Pancreas (tissue), 10 donors: ENCODE measurements at regions of chr5 and their contacts with region 1.

Region 1: GRCh38 chr5:177390363-177391300 is 6.4 kb downstream of the SLC34A1 start:
- DNase-seq: peak; percentile 77 to 92 (median 86)
- ATAC-seq: peak; percentile 90 to 97 (median 95)
- H3K4me3 ChIP-seq: no peak overlapping the region
- H3K27ac ChIP-seq: no peak overlapping the region
- H3K4me1 ChIP-seq: no peaks in the 10 kb centered on the region
- H3K27me3 ChIP-seq: no peaks in the 10 kb centered on the region
- CTCF ChIP-seq: peak; percentile 95 to 99 (median 98)

Region 2: GRCh38 chr5:177311723-177312648 is 78.6 kb before region 1 on chr5 and contains the start of gene MXD3:
- intact Hi-C with region 1: loop called in 1 of 3 experiments (anchors 10 kb)
- DNase-seq: peak; percentile 92 to 95 (median 94)
- ATAC-seq: peak; percentile 61 to 93 (median 85)
- H3K4me3 ChIP-seq: peak within 1 kb of the TSS; percentile 20 to 50 (median 32)
- H3K27ac ChIP-seq: no peak within 1 kb of the TSS
- H3K4me1 ChIP-seq: peaks cover 11 to 32% (median 12%) of the 10 kb centered on the region in 3 donors
- H3K27me3 ChIP-seq: no peaks in the 10 kb centered on the region
- CTCF ChIP-seq: no peak
- total RNA-seq, gene MXD3: 3.0 to 7.1 (median 5.4) TPM

Region 3: DNA sequence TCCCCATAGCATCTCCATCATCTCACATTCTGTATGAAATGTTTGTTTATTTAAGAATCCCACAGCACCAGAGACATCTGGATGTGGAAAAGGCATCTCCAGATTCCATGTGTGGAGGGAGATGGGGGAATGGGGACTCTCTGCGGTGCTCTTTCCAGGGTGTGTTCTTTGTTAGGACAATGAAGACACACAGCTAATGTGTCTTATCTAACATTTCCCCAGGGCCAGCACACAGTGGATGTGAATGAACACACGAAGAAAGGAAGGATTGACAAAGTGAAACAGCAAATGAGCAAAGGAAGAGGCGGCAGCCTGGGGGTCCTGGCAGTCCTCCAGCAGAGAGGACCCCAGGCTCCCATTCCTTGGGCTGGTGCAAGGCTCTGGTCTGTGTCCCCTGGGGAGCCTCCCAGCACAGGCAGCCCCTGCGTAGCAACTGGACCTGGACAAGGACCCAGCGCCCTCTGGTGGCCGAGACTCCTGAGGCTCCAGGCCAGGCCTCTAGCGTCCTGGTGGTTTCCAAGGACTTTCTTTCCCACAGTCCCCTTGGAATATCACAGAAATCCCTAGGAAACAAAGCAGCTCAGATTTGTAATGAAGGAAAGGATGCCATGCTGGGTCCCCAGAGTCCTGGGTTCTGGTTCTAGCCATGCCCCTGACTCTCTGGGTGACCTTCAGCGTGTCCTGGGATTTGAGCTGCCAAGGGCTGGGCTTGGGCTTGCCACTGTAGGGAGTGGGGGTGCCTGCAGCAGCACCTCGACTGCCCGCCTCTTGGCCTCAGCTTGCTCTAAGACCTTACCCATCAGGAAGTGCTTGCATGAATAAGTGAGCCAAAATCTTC is 110.3 kb after region 1 on chr5:
- intact Hi-C with region 1: loop called in 2 of 3 experiments (anchors 5 kb)
- DNase-seq: peak; percentile 78 to 99 (median 90)
- ATAC-seq: peak in 3 of 4 donors; percentile 54 to 59 (median 54)
- H3K4me3 ChIP-seq: no peak overlapping the region
- H3K27ac ChIP-seq: no peak overlapping the region
- H3K4me1 ChIP-seq: peaks cover 0 to 5% (median 0%) of the 10 kb centered on the region in 3 donors
- H3K27me3 ChIP-seq: no peaks in the 10 kb centered on the region
- CTCF ChIP-seq: peak; percentile 85 to 97 (median 94)